ENCODE measurements at regions of chr3 and their contacts with region 1.

Region 1: GRCh38 chr3:112136959-112137693 is 4.1 kb upstream of the GCSAM start:
- DNase-seq: peak in 5 of 9 experiments; percentile 35 to 69 (median 46)
- ATAC-seq: peak; percentile 21
- H3K4me3 ChIP-seq: no peak overlapping the region
- H3K4me3 Mint-ChIP-seq: no peak overlapping the region
- H3K27ac ChIP-seq: no peak overlapping the region
- H3K27ac Mint-ChIP-seq: no peak overlapping the region
- H3K4me1 ChIP-seq: peaks cover 36% of the 10 kb centered on the region
- H3K4me1 Mint-ChIP-seq: peaks cover 62% of the 10 kb centered on the region
- H3K27me3 ChIP-seq: no peaks in the 10 kb centered on the region
- H3K27me3 Mint-ChIP-seq: no peaks in the 10 kb centered on the region
- CTCF ChIP-seq: peak; percentile 55

Region 2: GRCh38 chr3:112074721-112075497 is 62.2 kb before region 1 on chr3:
- CTCF ChIA-PET with region 1: no interaction called
- POLR2A ChIA-PET with region 1: no interaction called
- intact Hi-C with region 1: loop called in 1 of 2 experiments (anchors 2 kb)
- DNase-seq: peak in 7 of 9 experiments; percentile 7 to 62 (median 40)
- ATAC-seq: peak; percentile 85
- H3K4me3 ChIP-seq: no peak overlapping the region
- H3K4me3 Mint-ChIP-seq: peak overlapping the region; percentile 22
- H3K27ac ChIP-seq: peak overlapping the region in 1 of 2 experiments; percentile 23
- H3K27ac Mint-ChIP-seq: peak overlapping the region; percentile 78
- H3K4me1 ChIP-seq: peaks cover 19% of the 10 kb centered on the region
- H3K4me1 Mint-ChIP-seq: peaks cover 46% of the 10 kb centered on the region
- H3K27me3 ChIP-seq: no peaks in the 10 kb centered on the region
- H3K27me3 Mint-ChIP-seq: peaks cover 2% of the 10 kb centered on the region
- CTCF ChIP-seq: no peak

Region 3: DNA sequence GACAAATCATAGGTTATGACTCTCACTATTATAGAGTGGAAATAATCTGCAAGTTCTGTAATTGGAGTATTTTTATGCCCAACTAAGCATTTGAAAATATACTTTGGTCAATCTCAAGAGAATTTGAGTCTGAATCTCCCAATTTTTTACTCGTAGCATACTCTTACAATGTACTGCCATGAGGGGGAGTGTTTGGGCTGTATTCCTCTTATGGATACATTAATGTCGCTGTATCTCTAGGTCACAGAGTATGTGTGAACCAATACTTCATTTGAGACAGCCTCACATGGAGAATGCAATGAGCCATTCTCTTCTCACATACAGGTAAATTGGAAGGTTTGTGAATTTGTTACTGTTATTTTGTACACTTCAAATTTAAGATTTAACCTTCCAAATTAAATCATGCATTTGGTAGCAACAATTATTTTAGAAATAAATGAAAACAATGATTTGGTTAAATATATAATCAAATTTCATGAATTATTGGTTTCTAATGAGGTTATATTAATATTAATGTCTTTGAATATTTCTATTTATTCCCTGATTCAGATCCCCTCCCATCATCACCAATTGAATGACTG is 190.3 kb after region 1 on chr3:
- CTCF ChIA-PET with region 1: interaction called, 4 read pairs
- POLR2A ChIA-PET with region 1: no interaction called
- intact Hi-C with region 1: loop called in 1 of 2 experiments (anchors 5 kb)
- DNase-seq: peak in 4 of 9 experiments; percentile 33 to 79 (median 56)
- ATAC-seq: peak; percentile 100
- H3K4me3 ChIP-seq: no peak overlapping the region
- H3K4me3 Mint-ChIP-seq: no peak overlapping the region
- H3K27ac ChIP-seq: no peak overlapping the region
- H3K27ac Mint-ChIP-seq: no peak overlapping the region
- H3K4me1 ChIP-seq: no peaks in the 10 kb centered on the region
- H3K4me1 Mint-ChIP-seq: peaks cover 2% of the 10 kb centered on the region
- H3K27me3 ChIP-seq: no peaks in the 10 kb centered on the region
- H3K27me3 Mint-ChIP-seq: peaks cover 2% of the 10 kb centered on the region
- CTCF ChIP-seq: peak; percentile 79

Region 4: DNA sequence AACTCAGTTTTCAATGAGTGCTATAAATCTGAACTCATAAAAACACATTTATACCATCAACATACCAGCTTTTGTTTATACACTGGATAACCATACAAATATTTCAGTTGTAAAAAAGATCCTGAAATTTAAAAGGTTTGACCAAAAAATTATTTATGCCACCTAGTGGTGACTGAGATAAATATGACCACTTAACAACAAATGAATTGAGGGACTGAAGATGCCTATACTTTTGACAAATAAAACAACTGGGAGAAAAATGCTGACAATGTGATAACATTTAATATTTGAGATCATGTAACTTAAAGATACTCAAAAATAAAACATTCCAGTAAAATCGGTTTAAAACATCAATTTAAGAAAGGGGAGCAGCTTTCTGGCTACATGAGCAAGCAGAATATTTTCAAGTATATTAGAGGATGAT is 394.2 kb after region 1 on chr3:
- CTCF ChIA-PET with region 1: no interaction called
- POLR2A ChIA-PET with region 1: no interaction called
- intact Hi-C with region 1: loop called in 1 of 2 experiments (anchors 1 kb)
- DNase-seq: peak in 2 of 9 experiments; percentile 38 to 56
- ATAC-seq: peak; percentile 20
- H3K4me3 ChIP-seq: no peak overlapping the region
- H3K4me3 Mint-ChIP-seq: no peak overlapping the region
- H3K27ac ChIP-seq: no peak overlapping the region
- H3K27ac Mint-ChIP-seq: peak overlapping the region; percentile 39
- H3K4me1 ChIP-seq: no peaks in the 10 kb centered on the region
- H3K4me1 Mint-ChIP-seq: no peaks in the 10 kb centered on the region
- H3K27me3 ChIP-seq: no peaks in the 10 kb centered on the region
- H3K27me3 Mint-ChIP-seq: no peaks in the 10 kb centered on the region
- CTCF ChIP-seq: peak; percentile 78